Breast epithelium (tissue), 4 donors: ENCODE measurements at regions of chr22 and their contacts with region 1.

Region 1: GRCh38 chr22:40161194-40161593 is 16.5 kb upstream of the TNRC6B start:
- DNase-seq: no peak
- H3K4me3 ChIP-seq: no peak overlapping the region
- H3K27ac ChIP-seq: no peak overlapping the region
- H3K4me1 ChIP-seq: no peaks in the 10 kb centered on the region
- H3K27me3 ChIP-seq: no peaks in the 10 kb centered on the region
- CTCF ChIP-seq: no peak
- POLR2A ChIP-seq: no peak

Region 2: GRCh38 chr22:40128989-40129388 is 32.2 kb before region 1 on chr22:
- intact Hi-C with region 1: loop called (anchors 2 kb)
- DNase-seq: no peak
- H3K4me3 ChIP-seq: no peak overlapping the region
- H3K27ac ChIP-seq: no peak overlapping the region
- H3K4me1 ChIP-seq: no peaks in the 10 kb centered on the region
- H3K27me3 ChIP-seq: no peaks in the 10 kb centered on the region
- CTCF ChIP-seq: no peak
- POLR2A ChIP-seq: no peak

Region 3: DNA sequence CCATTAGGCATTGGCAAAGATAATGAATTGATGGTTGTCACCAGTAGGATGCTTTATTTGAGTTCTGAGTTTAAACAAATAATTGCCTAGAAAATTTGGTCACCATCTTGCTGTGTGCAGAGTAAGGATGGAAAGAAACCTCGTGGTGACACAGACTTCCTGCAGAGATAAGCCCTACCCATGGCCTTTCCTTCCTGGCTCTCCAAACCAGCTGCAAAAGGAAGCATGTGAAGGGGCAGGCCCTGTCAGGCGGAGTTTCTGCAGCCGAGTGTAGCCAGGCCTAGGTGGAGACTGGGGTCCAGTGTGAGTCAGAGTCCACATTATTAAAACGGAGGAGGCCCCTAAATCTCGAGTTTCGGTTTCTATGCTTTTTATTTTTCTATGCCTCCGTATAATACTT is 102.0 kb after region 1 on chr22:
- intact Hi-C with region 1: no loop called
- DNase-seq: no peak
- H3K4me3 ChIP-seq: no peak overlapping the region
- H3K27ac ChIP-seq: no peak overlapping the region
- H3K4me1 ChIP-seq: peaks cover 0 to 3% of the 10 kb centered on the region in 2 donors
- H3K27me3 ChIP-seq: no peaks in the 10 kb centered on the region
- CTCF ChIP-seq: no peak
- POLR2A ChIP-seq: no peak